AG04450 (cell line): ENCODE measurements at regions of chr6 and their contacts with region 1.

Region 1: DNA sequence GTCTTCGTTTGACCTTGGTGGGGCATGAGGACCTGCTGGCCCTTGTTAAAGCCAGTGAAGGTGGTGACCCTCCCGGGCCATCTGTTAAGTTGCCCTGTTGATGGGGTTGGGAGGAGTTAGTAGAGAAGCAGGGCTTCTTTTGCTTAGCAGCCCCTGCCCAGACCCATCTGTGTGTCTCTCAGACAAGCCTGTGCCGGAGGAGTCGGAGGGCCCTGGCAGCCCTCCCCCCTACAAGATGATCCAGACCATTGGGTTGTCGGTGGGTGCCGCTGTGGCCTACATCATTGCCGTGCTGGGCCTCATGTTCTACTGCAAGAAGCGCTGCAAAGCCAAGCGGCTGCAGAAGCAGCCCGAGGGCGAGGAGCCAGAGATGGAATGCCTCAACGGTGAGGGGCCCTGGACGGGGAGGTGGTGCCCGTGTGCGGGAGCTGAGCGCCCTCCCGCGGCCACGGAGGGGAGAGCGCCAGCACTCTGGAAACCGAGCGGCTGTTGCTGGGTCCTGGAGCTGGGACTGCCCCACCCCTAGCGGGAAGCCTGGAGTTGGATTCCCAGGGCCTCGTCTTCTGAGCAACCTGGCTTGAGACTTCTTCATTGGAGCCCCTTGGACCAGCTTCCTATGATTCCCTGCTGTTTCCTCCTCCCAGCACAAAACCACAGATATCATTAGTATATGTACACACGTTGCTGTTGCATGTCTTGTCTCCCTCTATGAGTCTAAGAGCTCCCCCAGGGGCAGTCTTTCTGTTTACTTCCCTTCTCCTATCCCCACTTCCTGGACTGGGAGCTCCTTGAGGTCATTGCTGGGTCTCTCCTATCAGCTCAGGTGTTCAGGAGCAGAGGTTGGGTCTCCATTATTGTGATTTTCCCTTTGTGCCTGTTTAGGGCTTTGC is 27.6 kb upstream of the SRF start:
- DNase-seq: peak; percentile 86
- H3K4me3 ChIP-seq: no peak overlapping the region
- H3K27ac ChIP-seq: peak overlapping the region; percentile 31
- H3K27me3 ChIP-seq: no peaks in the 10 kb centered on the region
- CTCF ChIP-seq: peak; percentile 95

Region 2: GRCh38 chr6:42511803-42512422 is 631.6 kb before region 1 on chr6:
- CTCF ChIA-PET with region 1: no interaction called
- POLR2A ChIA-PET with region 1: no interaction called
- DNase-seq: peak; percentile 18
- H3K4me3 ChIP-seq: no peak overlapping the region
- H3K27ac ChIP-seq: no peak overlapping the region
- H3K27me3 ChIP-seq: no peaks in the 10 kb centered on the region
- CTCF ChIP-seq: no peak

Region 3: GRCh38 chr6:43053545-43054205 is 89.8 kb before region 1 on chr6 and contains the start of gene CUL7:
- CTCF ChIA-PET with region 1: interaction called, 10 read pairs
- POLR2A ChIA-PET with region 1: interaction called, 10 read pairs
- DNase-seq: peak; percentile 85
- H3K4me3 ChIP-seq: peak within 1 kb of the TSS; percentile 89
- H3K27ac ChIP-seq: peak within 1 kb of the TSS; percentile 93
- H3K27me3 ChIP-seq: no peaks in the 10 kb centered on the region
- CTCF ChIP-seq: no peak
- polyA plus RNA-seq, gene CUL7: 37.5 and 44.8 TPM in 2 replicates

Region 4: GRCh38 chr6:43070028-43070632 is 73.3 kb before region 1 on chr6:
- CTCF ChIA-PET with region 1: interaction called, 45 read pairs
- POLR2A ChIA-PET with region 1: interaction called, 8 read pairs
- DNase-seq: no peak
- H3K4me3 ChIP-seq: no peak overlapping the region
- H3K27ac ChIP-seq: no peak overlapping the region
- H3K27me3 ChIP-seq: no peaks in the 10 kb centered on the region
- CTCF ChIP-seq: peak; percentile 73

Region 5: DNA sequence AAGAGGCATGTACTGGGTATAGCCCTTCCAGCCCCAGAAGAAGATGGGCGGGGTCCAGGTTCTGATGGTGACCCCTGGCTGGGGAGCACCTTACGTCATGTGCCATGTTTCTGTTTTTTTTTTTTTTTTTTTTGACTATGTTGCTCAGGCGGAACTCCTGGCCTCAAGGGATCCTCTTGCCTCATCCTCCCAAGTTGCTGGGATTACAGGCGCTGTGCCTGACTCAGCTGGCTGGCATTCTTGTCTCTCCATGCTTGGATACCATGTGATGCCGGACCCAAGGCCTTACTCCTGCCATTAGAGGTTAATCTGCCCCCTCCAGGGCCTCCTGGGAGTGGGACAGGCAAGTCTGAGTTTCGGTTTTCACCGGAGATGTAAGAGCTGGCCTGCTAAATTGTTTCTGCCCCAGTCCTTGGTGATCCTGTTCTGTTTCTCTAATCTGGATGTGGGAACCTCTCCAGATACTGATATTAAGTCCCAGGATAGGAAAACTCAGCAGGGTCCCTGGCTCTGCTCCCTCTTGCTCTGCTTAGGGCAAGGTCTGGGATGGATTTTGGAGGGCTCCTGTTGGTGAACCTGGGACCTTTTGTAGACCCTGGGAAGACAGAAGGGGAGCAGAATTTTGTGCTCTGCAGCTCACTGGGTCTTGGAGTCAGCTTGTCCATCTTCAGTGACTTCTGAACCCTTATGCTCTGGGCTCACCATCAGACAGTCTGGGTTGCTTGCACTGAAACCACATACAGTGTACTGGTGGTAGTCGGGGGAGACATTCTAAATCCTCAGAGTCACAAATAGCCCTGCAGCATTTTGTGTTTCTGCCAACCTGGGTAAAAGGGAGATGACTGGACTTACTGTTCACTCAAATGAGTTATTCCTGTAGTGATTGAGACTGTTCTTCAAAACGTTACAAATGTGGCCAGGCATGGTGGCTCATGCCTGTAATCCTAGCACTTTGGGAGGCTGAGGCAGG is 22.3 kb before region 1 on chr6:
- CTCF ChIA-PET with region 1: interaction called, 15 read pairs
- POLR2A ChIA-PET with region 1: interaction called, 3 read pairs
- DNase-seq: peak; percentile 94
- H3K4me3 ChIP-seq: peak overlapping the region; percentile 14; the same call in 1 of the 2 replicates
- H3K27ac ChIP-seq: peak overlapping the region; percentile 96
- H3K27me3 ChIP-seq: no peaks in the 10 kb centered on the region
- CTCF ChIP-seq: peak; percentile 20

Region 6: DNA sequence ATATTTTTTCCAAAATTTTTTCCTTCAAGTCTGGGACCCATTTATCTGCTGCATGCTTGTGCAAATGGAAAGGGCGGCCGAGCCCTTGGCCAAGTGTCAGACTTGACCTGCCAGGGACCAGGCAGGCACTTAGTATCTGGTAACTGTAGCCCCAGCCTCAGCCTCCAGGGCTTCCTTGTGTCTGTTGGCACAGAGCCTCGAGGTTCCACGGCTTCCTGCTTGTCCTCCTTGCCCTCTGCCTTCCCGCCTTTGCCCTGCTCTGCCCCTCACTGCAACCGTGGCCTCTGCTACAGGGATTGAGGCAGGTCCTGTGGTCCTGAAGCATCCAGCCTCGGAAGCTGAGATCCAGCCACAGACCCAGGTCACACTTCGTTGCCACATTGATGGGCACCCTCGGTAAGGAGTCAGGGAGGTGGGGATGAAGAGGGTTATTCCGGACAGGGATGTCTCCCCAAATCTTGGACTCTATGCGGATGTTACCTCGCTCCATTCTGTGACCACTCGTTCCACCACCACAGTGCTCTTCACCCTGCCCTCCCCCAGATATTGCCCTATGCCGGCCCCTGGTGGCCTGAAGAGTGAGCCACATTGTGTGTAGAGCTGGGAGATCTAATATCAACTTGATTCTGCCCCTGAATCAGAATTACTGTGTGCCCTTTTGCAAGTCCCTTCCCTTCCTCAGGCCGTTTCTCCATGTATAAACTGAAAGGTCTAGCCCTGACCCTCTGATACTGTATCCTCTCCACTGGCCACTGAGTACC is 13.9 kb before region 1 on chr6:
- CTCF ChIA-PET with region 1: interaction called, 15 read pairs
- POLR2A ChIA-PET with region 1: no interaction called
- DNase-seq: no peak
- H3K4me3 ChIP-seq: no peak overlapping the region
- H3K27ac ChIP-seq: no peak overlapping the region
- H3K27me3 ChIP-seq: no peaks in the 10 kb centered on the region
- CTCF ChIP-seq: peak; percentile 80

Region 7: GRCh38 chr6:44177678-44178423 is 1034.4 kb after region 1 on chr6:
- CTCF ChIA-PET with region 1: no interaction called
- POLR2A ChIA-PET with region 1: no interaction called
- DNase-seq: peak; percentile 20
- H3K4me3 ChIP-seq: no peak overlapping the region
- H3K27ac ChIP-seq: peak overlapping the region; percentile 39
- H3K27me3 ChIP-seq: peaks cover 1% of the 10 kb centered on the region
- CTCF ChIP-seq: no peak